Cardiac septum (tissue), 1 donor: ENCODE measurements at regions of chr3 and their contacts with region 1.

Region 1: DNA sequence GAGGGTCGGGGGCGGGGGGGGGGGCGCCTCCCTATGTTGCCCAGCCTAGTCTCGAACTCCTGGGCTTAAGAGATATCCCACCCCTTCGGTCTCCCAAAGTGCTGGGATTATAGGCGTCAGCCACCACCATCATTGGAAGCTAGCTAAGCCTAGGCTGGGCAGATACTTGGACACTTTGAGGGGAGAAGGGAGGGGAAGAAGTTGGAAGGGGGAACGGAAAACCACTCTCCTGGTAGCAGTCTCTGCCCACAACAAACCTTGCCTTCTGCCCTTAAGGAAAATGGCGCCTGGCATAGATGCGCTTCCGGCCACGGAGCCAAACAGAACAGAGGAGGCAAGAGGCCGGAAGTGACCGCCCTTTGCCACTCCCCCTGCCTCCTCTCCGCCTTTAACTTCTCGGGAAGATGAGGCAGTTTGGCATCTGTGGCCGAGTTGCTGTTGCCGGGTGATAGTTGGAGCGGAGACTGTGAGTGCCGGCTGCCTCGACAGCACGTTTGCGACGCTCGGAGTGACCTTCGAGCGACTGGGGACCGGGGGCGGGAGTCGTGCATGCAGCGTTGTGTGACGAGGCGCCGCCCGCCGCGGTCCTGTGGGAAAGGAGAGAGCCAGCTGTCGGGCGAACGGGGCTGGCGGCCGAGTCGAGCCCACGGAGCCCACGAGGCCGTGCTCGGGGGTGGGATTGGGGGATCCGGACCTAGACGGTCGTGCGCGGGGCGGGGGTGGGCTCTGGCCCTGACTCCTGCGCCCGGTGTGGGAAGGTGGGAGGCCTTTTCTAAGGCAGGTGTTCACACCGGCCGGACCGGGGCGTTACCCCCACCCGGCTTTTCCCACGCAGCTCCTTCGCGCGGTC is at the start of gene MFN1:
- DNase-seq: peak; percentile 97
- total RNA-seq, gene MFN1: 49.2 TPM

Region 2: DNA sequence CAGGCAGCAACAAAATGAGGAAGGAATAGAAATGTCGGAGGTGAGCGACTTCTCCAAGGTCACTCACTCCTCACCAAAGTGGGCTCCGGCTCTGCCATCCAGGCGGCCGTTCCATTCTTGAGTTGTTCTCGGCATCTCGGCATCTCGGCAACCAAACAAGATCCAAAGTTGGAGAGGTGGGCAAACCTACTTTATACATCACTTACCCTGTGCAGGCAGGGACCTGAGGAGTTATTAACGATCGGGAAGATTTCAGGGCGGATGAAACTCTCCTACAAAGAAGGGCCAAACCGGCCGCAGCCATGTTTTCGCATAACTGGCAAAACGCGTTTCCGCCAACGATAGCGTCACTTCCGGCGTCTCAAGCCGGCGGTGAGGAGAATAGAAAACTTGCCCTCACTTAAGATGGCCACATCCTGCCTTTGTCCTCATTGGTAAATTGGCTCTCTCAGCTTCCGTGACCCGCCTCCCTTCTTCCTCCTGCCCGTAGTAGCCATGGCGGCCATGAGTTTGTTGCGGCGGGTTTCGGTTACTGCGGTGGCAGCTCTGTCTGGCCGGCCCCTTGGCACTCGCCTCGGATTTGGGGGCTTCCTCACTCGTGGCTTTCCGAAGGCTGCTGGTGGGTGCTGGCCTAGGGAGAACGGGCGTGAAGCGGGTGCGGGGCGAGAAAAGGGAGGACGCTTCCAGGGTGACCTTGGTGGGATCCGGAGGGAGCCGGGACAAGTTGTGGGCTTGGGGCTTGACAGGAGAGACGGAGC is 256.9 kb after region 1 on chr3 and contains the starts of genes MRPL47 and NDUFB5:
- intact Hi-C with region 1: loop called (anchors 2 kb)
- DNase-seq: peak; percentile 98
- total RNA-seq, gene MRPL47: 47.5 TPM
- total RNA-seq, gene NDUFB5: 258 TPM